ENCODE measurements at regions of chr12 and their contacts with region 1.

Region 1: GRCh38 chr12:4107436-4107878 is 166.1 kb upstream of the CCND2 start:
- DNase-seq: peak; percentile 42 to 93 (median 67)
- ATAC-seq: peak; percentile 98
- H3K4me3 ChIP-seq: no peak overlapping the region
- H3K4me3 Mint-ChIP-seq: peak overlapping the region; percentile 53
- H3K27ac ChIP-seq: peak overlapping the region in 1 of 2 experiments; percentile 72
- H3K27ac Mint-ChIP-seq: peak overlapping the region; percentile 94
- H3K4me1 ChIP-seq: peaks cover 12% of the 10 kb centered on the region
- H3K4me1 Mint-ChIP-seq: peaks cover 17% of the 10 kb centered on the region
- H3K27me3 ChIP-seq: no peaks in the 10 kb centered on the region
- H3K27me3 Mint-ChIP-seq: peaks cover 4% of the 10 kb centered on the region
- CTCF ChIP-seq: peak; percentile 80

Region 2: DNA sequence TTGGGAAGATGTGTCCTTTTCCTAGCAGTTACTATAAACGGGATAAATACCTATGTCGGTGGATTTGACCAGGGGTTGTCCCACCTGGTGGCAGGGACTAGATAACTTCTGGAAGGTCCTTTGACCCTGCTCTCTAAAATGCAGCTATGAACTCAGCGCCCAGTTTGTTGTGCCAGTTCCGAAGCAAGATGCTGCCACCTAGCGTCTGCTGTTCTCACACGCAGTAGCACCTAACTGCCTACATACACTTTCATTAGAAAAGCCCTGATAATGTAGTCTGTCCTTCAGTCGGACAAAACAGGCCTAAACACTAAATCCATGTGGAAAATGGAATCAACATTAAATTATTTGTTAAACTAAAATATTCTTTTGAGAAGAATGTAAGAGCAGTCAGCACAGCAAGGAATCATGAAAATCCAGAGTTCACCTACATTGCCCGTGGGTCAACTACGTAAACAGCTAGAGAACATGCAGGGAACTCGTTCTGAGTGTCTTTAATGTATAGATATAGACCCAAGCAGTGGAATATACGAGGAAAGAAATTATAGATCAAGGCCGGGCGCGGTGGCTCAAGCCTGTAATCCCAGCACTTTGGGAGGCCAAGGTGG is 303.5 kb before region 1 on chr12:
- CTCF ChIA-PET with region 1: no interaction called
- POLR2A ChIA-PET with region 1: no interaction called
- intact Hi-C with region 1: no loop called
- DNase-seq: peak; percentile 39 to 80 (median 73)
- ATAC-seq: peak; percentile 77
- H3K4me3 ChIP-seq: no peak overlapping the region
- H3K4me3 Mint-ChIP-seq: no peak overlapping the region
- H3K27ac ChIP-seq: no peak overlapping the region
- H3K27ac Mint-ChIP-seq: no peak overlapping the region
- H3K4me1 ChIP-seq: no peaks in the 10 kb centered on the region
- H3K4me1 Mint-ChIP-seq: no peaks in the 10 kb centered on the region
- H3K27me3 ChIP-seq: no peaks in the 10 kb centered on the region
- H3K27me3 Mint-ChIP-seq: no peaks in the 10 kb centered on the region
- CTCF ChIP-seq: peak; percentile 77

Region 3: DNA sequence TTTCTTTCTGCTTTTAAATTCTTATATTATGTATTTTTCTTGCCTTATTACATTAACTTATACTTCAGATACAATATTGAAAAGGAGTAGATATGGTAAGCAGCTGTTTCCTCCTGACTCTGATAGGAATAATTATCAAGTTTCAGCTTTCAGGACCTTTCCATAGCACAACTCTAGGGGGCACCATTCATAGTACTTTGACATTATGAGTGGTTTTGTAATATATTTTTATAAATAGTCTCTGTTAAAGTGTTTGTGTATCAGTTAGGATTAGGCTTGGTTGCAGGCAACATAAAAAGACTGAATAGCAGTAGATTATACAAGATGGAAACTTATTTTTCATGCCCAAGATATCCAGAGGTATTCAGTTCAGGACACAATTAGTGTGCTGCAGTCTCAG is 206.3 kb before region 1 on chr12:
- CTCF ChIA-PET with region 1: no interaction called
- POLR2A ChIA-PET with region 1: no interaction called
- intact Hi-C with region 1: no loop called
- DNase-seq: no peak
- ATAC-seq: no peak
- H3K4me3 ChIP-seq: no peak overlapping the region
- H3K4me3 Mint-ChIP-seq: no peak overlapping the region
- H3K27ac ChIP-seq: no peak overlapping the region
- H3K27ac Mint-ChIP-seq: no peak overlapping the region
- H3K4me1 ChIP-seq: peaks cover 39% of the 10 kb centered on the region
- H3K4me1 Mint-ChIP-seq: peaks cover 52% of the 10 kb centered on the region
- H3K27me3 ChIP-seq: no peaks in the 10 kb centered on the region
- H3K27me3 Mint-ChIP-seq: no peaks in the 10 kb centered on the region
- CTCF ChIP-seq: no peak

Region 4: DNA sequence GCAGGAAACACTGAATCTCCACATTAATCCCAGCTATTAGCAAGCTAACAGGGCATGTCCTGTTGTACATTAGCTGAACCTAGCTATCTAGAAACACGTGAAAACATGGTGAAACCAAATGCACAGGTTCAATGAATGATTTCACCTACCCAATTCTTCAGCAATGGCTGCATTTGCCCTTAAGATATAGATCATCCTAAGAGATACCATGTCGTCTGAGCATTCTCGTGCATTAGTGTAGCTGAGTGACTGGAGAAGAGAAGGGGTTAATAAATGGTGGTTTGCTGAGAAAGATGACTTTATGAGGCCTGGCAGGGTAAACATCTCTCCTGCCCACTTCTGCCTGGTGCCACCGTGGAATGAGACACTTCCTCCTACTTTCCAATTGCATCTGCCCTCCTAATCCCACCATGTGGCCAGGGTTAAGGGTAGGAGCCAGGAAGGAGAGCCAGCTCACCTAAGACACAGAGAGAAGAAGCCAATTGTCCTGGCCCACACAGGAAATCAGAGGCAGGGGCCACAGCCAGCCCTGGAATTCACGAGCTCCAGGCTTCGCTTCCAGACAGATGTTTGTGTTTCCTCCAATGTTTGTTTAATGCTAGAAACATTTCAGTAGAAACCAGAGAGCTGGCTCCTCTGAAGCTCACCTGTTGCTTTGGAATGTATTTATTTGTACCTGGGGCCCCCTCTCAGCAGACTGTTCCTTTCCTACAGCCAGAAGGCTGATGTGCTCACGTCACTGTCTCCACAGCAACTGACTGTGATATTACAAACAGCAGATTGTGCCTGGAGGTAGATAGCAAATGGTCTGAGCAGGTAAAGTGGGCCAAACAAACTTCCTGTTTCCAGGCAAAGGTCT is 108.3 kb before region 1 on chr12:
- CTCF ChIA-PET with region 1: interaction called, 3 read pairs
- POLR2A ChIA-PET with region 1: no interaction called
- intact Hi-C with region 1: loop called in 1 of 2 experiments (anchors 10 kb)
- DNase-seq: peak in 3 of 9 experiments; percentile 32 to 56 (median 33)
- ATAC-seq: peak; percentile 69
- H3K4me3 ChIP-seq: no peak overlapping the region
- H3K4me3 Mint-ChIP-seq: no peak overlapping the region
- H3K27ac ChIP-seq: no peak overlapping the region
- H3K27ac Mint-ChIP-seq: no peak overlapping the region
- H3K4me1 ChIP-seq: peaks cover 15% of the 10 kb centered on the region
- H3K4me1 Mint-ChIP-seq: peaks cover 24% of the 10 kb centered on the region
- H3K27me3 ChIP-seq: no peaks in the 10 kb centered on the region
- H3K27me3 Mint-ChIP-seq: no peaks in the 10 kb centered on the region
- CTCF ChIP-seq: no peak

Region 5: GRCh38 chr12:4091016-4091743 is 16.3 kb before region 1 on chr12:
- CTCF ChIA-PET with region 1: interaction called, 15 read pairs
- POLR2A ChIA-PET with region 1: interaction called, 3 read pairs
- intact Hi-C with region 1: no loop called
- DNase-seq: no peak
- ATAC-seq: no peak
- H3K4me3 ChIP-seq: no peak overlapping the region
- H3K4me3 Mint-ChIP-seq: no peak overlapping the region
- H3K27ac ChIP-seq: no peak overlapping the region
- H3K27ac Mint-ChIP-seq: peak overlapping the region; percentile 49
- H3K4me1 ChIP-seq: no peaks in the 10 kb centered on the region
- H3K4me1 Mint-ChIP-seq: no peaks in the 10 kb centered on the region
- H3K27me3 ChIP-seq: peaks cover 0 to 3% of the 10 kb centered on the region in 2 experiments
- H3K27me3 Mint-ChIP-seq: no peaks in the 10 kb centered on the region
- CTCF ChIP-seq: no peak

Region 6: DNA sequence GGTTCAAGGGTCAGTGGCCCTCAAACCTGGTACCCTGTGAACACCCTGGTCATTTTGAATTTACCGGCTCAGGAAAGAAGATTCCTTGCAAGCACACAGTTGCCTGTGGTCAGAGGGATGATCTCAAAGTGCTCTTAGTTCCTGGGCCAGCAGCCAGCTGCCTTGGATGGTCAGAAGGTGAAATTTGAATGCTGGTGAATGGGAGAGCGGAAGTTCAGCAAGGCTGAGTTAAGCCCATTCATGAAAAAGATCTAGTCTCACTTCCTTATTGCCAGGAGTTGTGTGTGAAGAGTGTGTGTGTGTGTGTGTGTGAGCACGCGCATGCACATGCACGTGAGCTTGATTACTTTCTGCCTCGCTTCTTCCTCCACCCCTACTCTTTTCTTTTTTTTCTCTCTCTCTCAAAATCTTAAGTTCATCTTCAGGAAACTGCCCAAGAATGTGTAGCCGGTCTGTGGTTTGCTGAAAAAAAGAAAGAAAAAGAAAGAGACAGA is 10.6 kb after region 1 on chr12:
- CTCF ChIA-PET with region 1: interaction called, 34 read pairs
- POLR2A ChIA-PET with region 1: interaction called, 4 read pairs
- intact Hi-C with region 1: no loop called
- DNase-seq: peak in 2 of 9 experiments; percentile 48 to 68
- ATAC-seq: peak; percentile 61
- H3K4me3 ChIP-seq: no peak overlapping the region
- H3K4me3 Mint-ChIP-seq: peak overlapping the region; percentile 76
- H3K27ac ChIP-seq: no peak overlapping the region
- H3K27ac Mint-ChIP-seq: peak overlapping the region; percentile 66
- H3K4me1 ChIP-seq: peaks cover 27% of the 10 kb centered on the region
- H3K4me1 Mint-ChIP-seq: peaks cover 36% of the 10 kb centered on the region
- H3K27me3 ChIP-seq: no peaks in the 10 kb centered on the region
- H3K27me3 Mint-ChIP-seq: no peaks in the 10 kb centered on the region
- CTCF ChIP-seq: no peak

Region 7: GRCh38 chr12:4148418-4149056 is 41.1 kb after region 1 on chr12:
- CTCF ChIA-PET with region 1: interaction called, 5 read pairs
- POLR2A ChIA-PET with region 1: no interaction called
- intact Hi-C with region 1: loop called in 1 of 2 experiments (anchors 2 kb)
- DNase-seq: peak; percentile 29 to 75 (median 51)
- ATAC-seq: peak; percentile 65
- H3K4me3 ChIP-seq: no peak overlapping the region
- H3K4me3 Mint-ChIP-seq: no peak overlapping the region
- H3K27ac ChIP-seq: no peak overlapping the region
- H3K27ac Mint-ChIP-seq: no peak overlapping the region
- H3K4me1 ChIP-seq: peaks cover 20% of the 10 kb centered on the region
- H3K4me1 Mint-ChIP-seq: peaks cover 36% of the 10 kb centered on the region
- H3K27me3 ChIP-seq: no peaks in the 10 kb centered on the region
- H3K27me3 Mint-ChIP-seq: no peaks in the 10 kb centered on the region
- CTCF ChIP-seq: no peak

Region 8: DNA sequence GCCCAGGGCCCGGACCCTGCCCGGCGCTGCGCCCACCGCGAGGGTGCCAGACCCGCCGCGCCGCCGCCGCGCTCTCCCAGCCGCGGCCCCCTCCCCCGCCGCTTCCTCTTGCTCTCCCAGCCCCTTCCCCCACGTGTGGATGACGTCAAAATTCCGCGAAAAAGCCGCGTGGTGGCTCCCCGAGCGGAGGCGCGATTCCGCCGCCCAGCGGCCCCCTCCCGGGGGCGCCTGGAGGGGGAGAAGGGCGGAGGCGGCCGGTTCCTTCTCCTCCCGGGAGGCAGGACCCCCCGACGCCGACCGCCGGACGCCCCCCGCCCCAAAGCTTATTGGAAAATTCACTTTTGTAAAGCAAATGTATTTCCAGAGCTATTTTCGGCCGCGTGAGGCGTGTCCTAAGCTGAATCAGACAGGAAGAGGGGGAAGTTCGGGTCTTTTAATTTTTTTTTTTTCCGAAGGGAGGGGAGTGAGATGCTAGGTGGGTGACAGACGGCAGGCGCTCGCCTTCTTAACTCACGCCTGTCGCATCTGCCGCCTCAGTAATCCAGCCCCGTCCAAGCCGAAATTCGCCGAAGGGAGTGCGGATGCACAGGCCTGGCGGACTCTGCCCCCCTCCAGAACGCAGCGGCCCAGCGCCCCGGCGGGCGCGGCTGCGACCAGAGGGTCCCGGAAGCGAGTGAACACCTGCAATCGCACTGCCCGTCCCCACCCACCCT is 162.0 kb after region 1 on chr12:
- CTCF ChIA-PET with region 1: interaction called, 90 read pairs
- POLR2A ChIA-PET with region 1: interaction called, 11 read pairs
- intact Hi-C with region 1: no loop called
- DNase-seq: peak; percentile 87 to 97 (median 93)
- ATAC-seq: peak; percentile 42
- H3K4me3 ChIP-seq: peak overlapping the region; percentile 70 to 91
- H3K4me3 Mint-ChIP-seq: peak overlapping the region; percentile 100
- H3K27ac ChIP-seq: peak overlapping the region; percentile 93 to 94
- H3K27ac Mint-ChIP-seq: peak overlapping the region; percentile 95
- H3K4me1 ChIP-seq: peaks cover 20% of the 10 kb centered on the region
- H3K4me1 Mint-ChIP-seq: peaks cover 21% of the 10 kb centered on the region
- H3K27me3 ChIP-seq: no peaks in the 10 kb centered on the region
- H3K27me3 Mint-ChIP-seq: no peaks in the 10 kb centered on the region
- CTCF ChIP-seq: no peak